SK-N-SH (cell line): ENCODE measurements at regions of chr7 and their contacts with region 1.

Region 1: GRCh38 chr7:12524794-12525386 is 45.6 kb upstream of the SCIN start:
- DNase-seq: peak; percentile 47
- H3K4me3 ChIP-seq: no peak overlapping the region; a peak in 1 of 4 replicates
- H3K27ac ChIP-seq: no peak overlapping the region
- H3K4me1 ChIP-seq: no peaks in the 10 kb centered on the region
- H3K27me3 ChIP-seq: no peaks in the 10 kb centered on the region; the same call in 1 of the 2 replicates
- CTCF ChIP-seq: peak; percentile 85
- EP300 ChIP-seq: no peak
- RAD21 ChIP-seq: peak; percentile 89

Region 2: GRCh38 chr7:12504149-12504548 is 20.7 kb before region 1 on chr7:
- CTCF ChIA-PET with region 1: interaction called, 10 read pairs
- POLR2A ChIA-PET with region 1: no interaction called
- DNase-seq: no peak
- H3K4me3 ChIP-seq: no peak overlapping the region
- H3K27ac ChIP-seq: no peak overlapping the region
- H3K4me1 ChIP-seq: no peaks in the 10 kb centered on the region
- H3K27me3 ChIP-seq: no peaks in the 10 kb centered on the region
- CTCF ChIP-seq: no peak
- EP300 ChIP-seq: no peak
- RAD21 ChIP-seq: no peak

Region 3: DNA sequence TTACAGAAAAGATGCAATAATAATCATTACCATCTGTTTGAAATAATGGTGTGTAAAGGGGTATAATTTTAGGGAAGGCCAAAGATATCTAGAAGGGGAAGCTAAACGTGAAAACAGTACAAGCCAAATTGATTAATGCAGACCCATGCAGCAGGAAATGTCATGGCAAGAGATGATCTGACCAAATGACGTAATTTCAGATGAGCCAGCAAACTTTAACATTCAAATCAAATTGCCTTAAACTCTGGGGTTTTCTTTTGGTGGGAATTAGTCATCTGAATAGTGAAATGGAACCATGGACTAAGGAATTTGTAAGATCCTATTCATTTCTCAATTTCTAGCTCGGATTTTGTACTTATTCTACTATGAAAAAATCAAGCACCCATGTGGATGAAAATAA is 24.2 kb after region 1 on chr7:
- CTCF ChIA-PET with region 1: interaction called, 15 read pairs
- POLR2A ChIA-PET with region 1: no interaction called
- DNase-seq: no peak
- H3K4me3 ChIP-seq: no peak overlapping the region
- H3K27ac ChIP-seq: no peak overlapping the region
- H3K4me1 ChIP-seq: no peaks in the 10 kb centered on the region
- H3K27me3 ChIP-seq: no peaks in the 10 kb centered on the region; the same call in 1 of the 2 replicates
- CTCF ChIP-seq: no peak
- EP300 ChIP-seq: no peak
- RAD21 ChIP-seq: no peak

Region 4: DNA sequence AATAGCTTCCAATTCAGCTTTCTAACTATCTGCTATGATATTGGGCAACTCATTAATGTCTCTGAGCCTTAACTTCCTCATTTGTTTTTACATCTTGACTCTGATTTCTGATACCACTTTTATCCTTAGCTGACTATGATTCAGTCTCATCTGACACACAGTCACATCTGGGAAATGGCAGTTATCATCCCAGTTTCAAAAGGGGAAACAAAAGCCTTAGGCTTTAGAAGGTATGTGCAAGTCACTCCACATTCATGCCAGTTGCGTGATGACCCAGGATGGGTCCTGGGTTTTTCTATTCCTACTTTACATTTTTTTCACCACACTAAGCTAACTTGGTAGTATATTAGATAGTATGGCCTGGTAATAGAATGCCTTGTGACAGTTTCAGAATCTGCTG is 58.3 kb after region 1 on chr7:
- CTCF ChIA-PET with region 1: interaction called, 12 read pairs
- POLR2A ChIA-PET with region 1: no interaction called
- DNase-seq: no peak
- H3K4me3 ChIP-seq: no peak overlapping the region
- H3K27ac ChIP-seq: no peak overlapping the region
- H3K4me1 ChIP-seq: no peaks in the 10 kb centered on the region
- H3K27me3 ChIP-seq: no peaks in the 10 kb centered on the region; the same call in 1 of the 2 replicates
- CTCF ChIP-seq: no peak
- EP300 ChIP-seq: no peak
- RAD21 ChIP-seq: no peak

Region 5: DNA sequence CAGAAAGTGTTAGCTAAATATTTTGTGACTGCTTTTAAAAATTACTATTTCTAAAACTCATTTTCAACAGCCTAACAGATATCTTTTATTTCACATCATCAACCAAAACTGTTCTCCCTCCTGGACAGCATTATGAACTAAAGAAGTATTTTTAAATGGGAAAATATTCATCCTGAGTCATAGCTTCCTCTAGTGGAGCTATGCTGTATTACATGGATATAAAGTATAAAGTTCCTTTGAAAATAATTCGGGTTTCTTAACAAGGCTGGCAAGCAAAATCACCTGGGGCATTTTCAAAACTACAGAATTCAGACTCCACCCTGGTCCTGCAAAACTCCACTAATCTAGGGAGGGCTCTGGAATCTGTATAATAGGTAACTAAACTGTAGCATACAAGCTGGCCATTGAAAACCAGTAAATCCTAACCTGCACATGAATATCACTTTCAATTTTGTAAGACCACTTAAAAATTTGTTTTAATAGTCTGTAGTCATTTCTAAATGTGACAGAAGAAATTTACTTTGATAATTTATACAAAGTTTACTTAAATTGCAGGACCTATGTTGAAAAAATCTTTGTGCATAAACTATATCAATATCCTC is 99.1 kb after region 1 on chr7:
- CTCF ChIA-PET with region 1: interaction called, 124 read pairs
- POLR2A ChIA-PET with region 1: no interaction called
- DNase-seq: peak; percentile 29
- H3K4me3 ChIP-seq: peak overlapping the region in 1 of 2 experiments; percentile 19; a peak in 1 of 4 replicates
- H3K27ac ChIP-seq: no peak overlapping the region
- H3K4me1 ChIP-seq: peaks cover 0 to 4% of the 10 kb centered on the region in 2 experiments; a peak in 1 of 4 replicates
- H3K27me3 ChIP-seq: no peaks in the 10 kb centered on the region
- CTCF ChIP-seq: peak; percentile 99
- EP300 ChIP-seq: no peak
- RAD21 ChIP-seq: peak; percentile 79

Region 6: DNA sequence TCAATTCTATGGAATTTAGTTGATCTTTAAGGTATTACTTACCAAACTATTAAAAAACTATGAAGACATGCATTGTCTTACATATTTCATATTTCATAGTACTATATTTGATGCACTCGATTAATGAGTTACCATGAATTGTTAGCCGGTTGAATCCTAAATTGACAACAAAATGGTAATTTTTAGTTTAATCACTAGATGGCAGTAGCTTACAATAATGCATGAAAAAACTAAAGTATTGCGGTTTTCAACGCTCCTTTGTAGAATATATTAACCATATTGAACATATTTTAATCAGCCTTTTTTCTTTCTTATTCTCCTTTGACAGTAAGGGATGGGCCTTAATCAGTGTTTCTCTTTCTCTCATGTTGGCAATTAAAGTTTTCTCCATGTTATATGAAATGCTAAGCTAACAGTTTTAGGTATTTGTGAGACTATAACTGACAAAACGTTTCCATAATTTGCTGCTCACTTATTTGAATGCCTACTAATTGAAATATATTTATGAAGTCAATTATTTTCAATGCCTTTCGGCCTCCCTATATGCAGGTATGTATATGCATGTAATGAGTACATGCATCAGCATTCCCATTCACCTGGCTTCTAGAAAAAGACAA is 114.1 kb after region 1 on chr7:
- CTCF ChIA-PET with region 1: interaction called, 27 read pairs
- POLR2A ChIA-PET with region 1: no interaction called
- DNase-seq: peak; percentile 39
- H3K4me3 ChIP-seq: no peak overlapping the region
- H3K27ac ChIP-seq: no peak overlapping the region
- H3K4me1 ChIP-seq: peaks cover 0 to 6% of the 10 kb centered on the region in 2 experiments; a peak in 3 of 4 replicates
- H3K27me3 ChIP-seq: no peaks in the 10 kb centered on the region; the same call in 1 of the 2 replicates
- CTCF ChIP-seq: peak; percentile 89
- EP300 ChIP-seq: no peak
- RAD21 ChIP-seq: peak; percentile 86